ENCODE measurements at regions of chr4 and their contacts with region 1.

Region 1: DNA sequence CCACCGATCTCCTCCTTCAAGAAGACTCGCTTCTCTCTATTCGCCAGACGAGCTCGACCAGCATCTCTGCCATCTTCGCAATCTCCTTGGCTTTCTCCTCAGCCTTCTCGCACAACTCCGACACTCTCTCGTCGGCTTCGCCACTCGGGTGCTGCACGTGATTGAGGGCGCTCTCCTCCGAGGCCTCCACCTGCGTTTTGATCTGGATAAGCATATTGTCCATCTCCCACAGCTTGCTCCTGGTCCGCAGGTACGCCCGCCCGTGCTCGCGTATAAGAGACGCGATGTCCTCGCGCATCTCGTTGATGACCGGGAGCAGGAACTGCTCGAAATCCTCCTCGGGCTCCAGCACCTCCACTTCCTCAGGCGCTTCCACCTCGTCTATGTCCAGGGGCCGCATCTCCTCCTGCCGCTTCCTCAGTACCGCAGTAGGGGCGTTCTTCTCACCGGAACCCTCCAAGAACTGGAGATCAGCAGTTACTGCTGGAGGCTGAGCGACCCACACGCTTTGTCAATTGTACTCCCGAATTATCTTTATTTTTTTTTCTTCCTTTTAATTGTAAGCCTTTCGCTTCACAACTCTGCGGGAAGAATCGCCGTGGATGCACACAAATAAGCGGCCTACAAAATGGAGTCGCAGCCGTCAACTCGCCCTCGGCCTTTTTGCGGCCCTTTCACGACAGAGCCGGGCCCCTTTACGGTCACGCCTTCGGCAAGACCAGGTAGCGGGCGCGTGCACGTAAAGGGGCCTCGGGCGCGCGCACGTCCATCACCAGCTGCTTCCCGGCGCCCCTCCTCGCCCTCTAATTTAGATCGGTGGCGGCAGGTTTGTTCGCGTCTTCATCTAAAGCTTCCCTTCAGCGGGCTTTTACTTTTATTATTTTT is at the start of gene MRFAP1L1:
- DNase-seq: peak; percentile 97
- ATAC-seq: peak; percentile 90 to 91
- total RNA-seq, gene MRFAP1L1: 45.9 to 52.9 TPM

Region 2: GRCh38 chr4:6627832-6628231 is 81.6 kb before region 1 on chr4:
- intact Hi-C with region 1: no loop called
- DNase-seq: no peak
- ATAC-seq: no peak

Region 3: DNA sequence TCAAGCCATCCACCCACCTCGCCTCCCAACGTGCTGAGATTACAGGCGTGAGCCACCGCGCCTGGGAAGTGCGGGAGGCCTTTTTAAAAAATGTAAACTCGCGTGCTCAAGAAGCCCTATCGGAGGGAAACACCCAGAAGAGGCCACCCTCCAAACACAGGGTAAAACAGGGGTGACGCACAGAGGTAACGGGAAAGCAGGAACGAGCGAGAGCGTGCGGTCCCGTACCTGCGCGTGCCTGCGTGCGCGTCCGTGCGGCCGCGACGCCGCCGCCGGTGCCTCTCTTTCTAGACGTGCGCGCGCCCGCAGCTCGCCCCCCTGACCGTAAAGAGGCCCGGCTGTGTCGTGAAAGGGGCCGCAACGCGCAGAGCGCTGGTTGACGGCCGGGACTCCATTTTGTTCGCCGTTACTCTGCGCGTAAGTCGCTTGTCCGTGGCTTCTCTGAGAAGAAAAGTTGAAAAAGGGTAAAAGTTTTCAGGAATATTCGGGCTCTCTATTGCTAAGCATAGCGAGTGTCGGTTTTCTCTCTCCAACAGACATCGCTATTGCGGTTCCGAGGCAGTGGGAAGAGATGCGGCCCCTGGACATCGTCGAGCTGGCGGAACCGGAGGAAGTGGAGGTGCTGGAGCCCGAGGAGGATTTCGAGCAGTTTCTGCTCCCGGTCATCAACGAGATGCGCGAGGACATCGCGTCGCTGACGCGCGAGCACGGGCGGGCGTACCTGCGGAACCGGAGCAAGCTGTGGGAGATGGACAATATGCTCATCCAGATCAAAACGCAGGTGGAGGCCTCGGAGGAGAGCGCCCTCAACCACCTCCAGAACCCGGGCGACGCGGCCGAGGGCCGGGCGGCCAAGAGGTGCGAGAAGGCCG is 68.9 kb before region 1 on chr4 and contains the start of gene MRFAP1:
- intact Hi-C with region 1: loop called (anchors 5 kb)
- DNase-seq: peak; percentile 96
- ATAC-seq: peak; percentile 93 to 95
- total RNA-seq, gene MRFAP1: 234 to 277 TPM

Region 4: GRCh38 chr4:6658209-6658595 is 51.3 kb before region 1 on chr4:
- intact Hi-C with region 1: no loop called
- DNase-seq: no peak
- ATAC-seq: peak in 1 of 2 donors; percentile 4

Measured in left cardiac atrium (tissue), 4 donors.